ENCODE measurements at regions of chr11 and their contacts with region 1.

Region 1: DNA sequence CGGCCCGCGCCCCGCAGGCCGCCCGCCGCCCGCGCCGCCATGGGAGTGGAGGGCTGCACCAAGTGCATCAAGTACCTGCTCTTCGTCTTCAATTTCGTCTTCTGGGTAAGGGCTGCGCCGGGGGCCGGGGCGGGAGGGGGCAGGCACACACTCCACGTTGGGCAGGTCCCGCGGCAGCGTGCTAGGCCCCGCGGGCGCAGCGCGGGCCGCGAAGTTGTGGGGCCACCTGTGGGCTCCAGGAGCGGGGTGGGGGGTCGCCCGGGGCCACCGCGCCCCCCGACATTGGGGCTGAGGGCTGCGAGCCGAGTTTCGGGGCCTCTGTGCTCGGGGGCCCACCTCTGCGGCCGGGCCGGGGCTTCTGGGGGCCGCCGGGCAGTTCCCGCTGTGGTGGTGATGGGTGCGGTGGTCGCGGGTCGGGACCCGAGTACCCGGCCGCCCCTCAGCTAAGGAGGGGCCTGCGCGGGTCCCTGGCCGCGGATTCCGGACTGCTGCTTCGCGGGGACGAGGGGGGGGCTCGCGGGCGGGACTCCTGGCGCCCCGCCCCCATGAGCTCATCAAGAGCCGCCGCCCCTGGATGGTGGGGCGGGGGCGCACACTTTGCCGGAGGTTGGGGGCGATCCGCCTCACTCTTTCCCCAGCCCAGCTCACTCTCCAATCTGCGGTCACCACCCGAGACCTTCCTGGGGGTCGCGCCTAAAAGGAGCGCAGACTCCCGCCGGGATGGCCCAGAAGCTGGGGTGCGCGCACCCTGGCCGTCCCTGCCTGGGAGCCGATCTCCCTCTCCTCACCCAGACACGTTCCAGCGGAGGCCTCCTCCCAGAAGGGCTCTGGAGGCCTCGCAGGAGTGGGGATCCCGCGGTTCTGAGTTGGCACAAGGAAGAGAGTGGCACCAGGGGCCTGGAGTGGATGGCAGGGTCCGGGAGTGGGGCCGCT is 667 bp downstream of the CD81 start:
- DNase-seq: no peak
- H3K4me3 ChIP-seq: peak overlapping the region; percentile 88
- H3K27ac ChIP-seq: peak overlapping the region; percentile 85
- H3K27me3 ChIP-seq: peaks cover 2% of the 10 kb centered on the region
- CTCF ChIP-seq: no peak

Region 2: DNA sequence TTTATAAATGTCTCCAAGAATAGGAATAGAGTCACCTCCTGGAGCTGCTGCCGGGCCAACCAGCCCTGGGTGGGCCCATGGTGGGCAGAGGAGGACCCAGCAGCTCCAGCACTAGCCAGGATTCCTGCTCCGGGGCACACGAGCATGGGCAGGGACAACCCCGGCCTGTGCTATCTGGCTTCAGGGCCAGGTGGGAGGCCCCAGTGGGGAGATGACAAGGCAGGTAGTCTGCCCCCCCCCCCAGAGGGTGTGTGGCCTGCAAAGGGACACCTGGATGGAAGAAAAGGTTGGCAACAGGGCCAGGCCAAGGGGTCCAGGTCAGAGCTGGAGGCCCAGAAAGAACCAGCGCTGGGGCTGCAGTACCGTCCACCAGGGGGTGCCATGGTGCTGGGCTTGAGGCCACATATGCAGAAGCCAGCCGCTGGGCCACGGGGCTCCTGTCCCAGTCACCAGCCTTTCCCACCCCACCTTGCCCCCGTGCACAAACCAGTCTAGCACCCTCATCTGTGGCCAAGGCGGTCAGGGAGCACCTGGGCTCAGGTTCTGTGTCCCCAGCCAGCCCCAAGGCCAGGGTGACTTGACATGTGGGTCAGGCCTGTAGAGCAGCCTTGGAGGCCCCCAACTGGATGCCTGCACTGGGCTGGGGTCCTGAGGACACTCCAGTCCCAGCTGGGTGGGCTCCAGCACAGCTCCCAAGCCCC is 72.5 kb before region 1 on chr11:
- CTCF ChIA-PET with region 1: no interaction called
- POLR2A ChIA-PET with region 1: interaction called, 14 read pairs
- DNase-seq: no peak
- H3K4me3 ChIP-seq: peak overlapping the region; percentile 27; the same call in 1 of the 2 replicates
- H3K27ac ChIP-seq: peak overlapping the region; percentile 95
- H3K27me3 ChIP-seq: no peaks in the 10 kb centered on the region
- CTCF ChIP-seq: peak; percentile 71

Region 3: GRCh38 chr11:2351701-2352100 is 26.1 kb before region 1 on chr11:
- CTCF ChIA-PET with region 1: no interaction called
- POLR2A ChIA-PET with region 1: interaction called, 13 read pairs
- DNase-seq: no peak
- H3K4me3 ChIP-seq: no peak overlapping the region
- H3K27ac ChIP-seq: no peak overlapping the region
- H3K27me3 ChIP-seq: peaks cover 10% of the 10 kb centered on the region
- CTCF ChIP-seq: no peak

Region 4: GRCh38 chr11:2390725-2391151 is 13.0 kb after region 1 on chr11:
- CTCF ChIA-PET with region 1: no interaction called
- POLR2A ChIA-PET with region 1: interaction called, 56 read pairs
- DNase-seq: peak; percentile 42
- H3K4me3 ChIP-seq: no peak overlapping the region
- H3K27ac ChIP-seq: peak overlapping the region; percentile 73
- H3K27me3 ChIP-seq: no peaks in the 10 kb centered on the region
- CTCF ChIP-seq: no peak

Region 5: DNA sequence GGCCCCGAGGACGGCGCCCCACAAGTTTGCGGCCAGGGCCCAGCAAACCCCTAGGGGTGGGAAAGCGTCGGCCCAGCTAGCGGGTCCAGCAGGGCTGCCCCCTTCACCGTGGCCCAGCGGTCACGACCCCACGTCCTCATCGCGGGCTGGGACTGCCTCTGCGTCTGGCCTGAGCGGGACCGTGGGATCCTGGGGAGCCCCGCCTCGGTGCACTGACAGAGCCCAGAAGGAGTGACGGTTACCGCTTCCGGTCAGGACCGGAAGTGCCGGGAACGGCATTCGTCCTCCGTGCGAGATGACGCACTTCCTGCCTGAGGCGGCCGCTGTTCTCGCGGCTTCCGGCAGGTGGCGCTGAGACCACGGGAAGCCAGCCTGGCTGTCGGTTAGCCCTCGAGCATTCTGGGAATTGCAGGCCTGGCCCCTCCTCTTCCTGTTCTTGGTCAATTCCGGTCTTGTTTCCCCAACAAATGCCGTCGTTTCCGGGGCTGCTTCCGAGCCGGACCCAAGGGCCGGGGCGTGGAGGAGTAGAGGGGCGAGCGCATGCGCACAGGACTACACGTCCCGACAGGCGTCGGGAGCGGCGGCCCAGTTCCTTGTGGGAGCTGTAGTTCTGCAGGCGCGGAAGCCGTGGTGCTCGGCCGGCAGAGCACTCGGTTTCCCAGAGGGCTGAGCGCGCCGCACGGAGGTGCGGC is 22.4 kb after region 1 on chr11 and contains the start of gene TSSC4:
- CTCF ChIA-PET with region 1: interaction called, 5 read pairs
- POLR2A ChIA-PET with region 1: interaction called, 33 read pairs
- DNase-seq: peak; percentile 100
- H3K4me3 ChIP-seq: peak within 1 kb of the TSS; percentile 91
- H3K27ac ChIP-seq: peak within 1 kb of the TSS; percentile 98
- H3K27me3 ChIP-seq: no peaks in the 10 kb centered on the region
- CTCF ChIP-seq: peak; percentile 97
- polyA plus RNA-seq, gene TSSC4: 13.3 and 19.2 TPM in 2 replicates